Activated B cell treated with CpG ODN at 0.5 μM for 24 hours (primary cell): ENCODE measurements at regions of chr2 and their contacts with region 1.

Region 1: GRCh38 chr2:118061135-118061955 is 26.9 kb upstream of the INSIG2 start:
- DNase-seq: no peak
- ATAC-seq: peak; percentile 82
- H3K4me3 Mint-ChIP-seq: no peak overlapping the region
- H3K27ac Mint-ChIP-seq: no peak overlapping the region
- H3K4me1 Mint-ChIP-seq: peaks cover 47% of the 10 kb centered on the region
- H3K27me3 Mint-ChIP-seq: peaks cover 8% of the 10 kb centered on the region
- CTCF ChIP-seq: no peak

Region 2: DNA sequence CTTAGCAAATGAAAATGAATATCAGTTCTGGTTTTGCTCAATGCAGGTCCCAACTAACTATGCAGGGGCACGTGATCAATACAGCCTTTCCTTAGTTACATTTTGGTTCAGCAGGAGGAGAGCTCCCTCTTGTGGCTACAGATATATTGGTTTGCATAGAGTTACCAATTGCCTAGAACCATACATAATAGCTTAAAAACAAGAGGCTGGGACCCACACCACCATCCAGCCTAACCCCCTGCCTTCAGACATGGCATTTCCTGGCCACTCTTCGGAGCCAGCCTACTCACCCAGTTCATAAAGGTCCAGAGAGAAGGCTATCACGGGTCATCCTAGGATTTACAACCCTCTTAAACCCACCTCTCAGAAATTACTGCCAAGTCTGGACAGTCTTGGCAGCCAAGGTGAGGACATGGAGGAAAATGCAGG is 57.9 kb before region 1 on chr2:
- CTCF ChIA-PET with region 1: interaction called, 12 read pairs
- POLR2A ChIA-PET with region 1: no interaction called
- intact Hi-C with region 1: loop called (anchors 1 kb)
- DNase-seq: peak; percentile 17
- ATAC-seq: peak; percentile 96
- H3K4me3 Mint-ChIP-seq: no peak overlapping the region
- H3K27ac Mint-ChIP-seq: no peak overlapping the region
- H3K4me1 Mint-ChIP-seq: peaks cover 4% of the 10 kb centered on the region
- H3K27me3 Mint-ChIP-seq: no peaks in the 10 kb centered on the region
- CTCF ChIP-seq: peak; percentile 60

Region 3: DNA sequence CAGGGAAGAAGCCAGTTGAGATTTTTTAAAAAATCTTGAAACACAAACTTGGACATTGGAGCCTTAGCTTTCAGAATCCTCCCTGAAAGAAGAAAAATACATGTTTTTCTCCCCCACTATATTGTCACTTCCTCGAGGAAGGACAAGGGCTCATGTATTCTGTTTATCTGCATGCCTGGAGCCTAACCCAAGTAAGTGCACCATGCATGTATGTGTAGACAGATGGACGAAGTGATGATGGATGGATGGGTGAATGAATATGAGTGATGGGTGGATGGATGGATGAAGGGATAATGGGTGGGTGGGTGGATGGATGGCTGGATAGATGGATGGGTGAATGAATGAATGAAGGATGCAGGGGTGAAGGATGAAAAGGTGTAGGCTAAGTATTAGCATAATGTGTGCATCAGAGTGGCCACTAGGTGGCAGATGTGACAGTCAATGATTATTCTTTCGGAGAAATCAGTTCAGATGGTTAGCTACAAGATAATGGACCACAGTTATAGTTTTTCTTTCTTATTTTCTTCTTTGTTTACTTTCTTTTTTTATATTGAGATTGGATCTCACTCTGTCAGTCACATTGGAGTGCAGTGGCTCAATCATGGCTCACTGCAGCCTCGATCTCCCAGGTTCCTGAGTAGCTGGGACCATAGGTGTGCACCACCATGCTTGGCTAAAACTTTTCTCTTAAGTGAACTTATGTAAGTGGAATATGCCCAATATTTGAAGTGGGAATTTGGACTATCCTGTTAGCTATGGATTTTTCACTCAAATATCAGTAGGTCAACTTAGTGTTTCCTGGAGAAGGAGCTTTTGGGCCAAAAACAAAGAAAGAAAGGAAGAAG is 29.0 kb before region 1 on chr2:
- CTCF ChIA-PET with region 1: interaction called, 26 read pairs
- POLR2A ChIA-PET with region 1: no interaction called
- intact Hi-C with region 1: loop called (anchors 1 kb)
- DNase-seq: no peak
- ATAC-seq: peak; percentile 77
- H3K4me3 Mint-ChIP-seq: no peak overlapping the region
- H3K27ac Mint-ChIP-seq: no peak overlapping the region
- H3K4me1 Mint-ChIP-seq: peaks cover 14% of the 10 kb centered on the region
- H3K27me3 Mint-ChIP-seq: peaks cover 24% of the 10 kb centered on the region
- CTCF ChIP-seq: peak; percentile 24

Region 4: DNA sequence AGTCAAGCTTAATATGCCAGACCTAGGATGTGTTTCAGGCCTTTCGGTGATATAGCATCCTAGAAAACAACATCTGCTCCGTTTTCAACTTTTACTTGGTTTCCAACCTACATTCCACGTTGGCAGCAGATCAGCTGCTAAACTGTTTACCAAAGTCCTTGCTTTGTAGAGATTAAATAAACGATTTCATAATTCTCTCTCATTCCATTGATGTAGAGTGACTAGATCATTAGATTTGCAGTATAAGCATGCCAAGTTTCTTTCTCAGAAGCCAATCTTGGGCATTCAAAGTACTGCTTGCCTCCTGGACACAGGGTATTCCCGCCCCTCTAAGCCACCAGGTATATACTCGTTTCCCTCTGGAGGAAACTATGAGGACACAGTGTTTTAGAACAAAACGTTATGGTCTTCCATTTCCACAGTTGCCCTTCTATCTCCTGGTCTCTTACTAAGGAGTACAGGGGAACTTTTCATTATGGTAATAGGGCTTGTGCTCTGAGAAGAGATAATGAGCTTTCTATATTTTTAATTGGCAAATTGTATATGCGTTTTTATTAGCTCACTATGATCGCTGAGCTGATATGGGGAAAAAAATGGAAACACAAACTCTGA is 16.4 kb after region 1 on chr2:
- CTCF ChIA-PET with region 1: interaction called, 10 read pairs
- POLR2A ChIA-PET with region 1: no interaction called
- intact Hi-C with region 1: no loop called
- DNase-seq: no peak
- ATAC-seq: no peak
- H3K4me3 Mint-ChIP-seq: no peak overlapping the region
- H3K27ac Mint-ChIP-seq: no peak overlapping the region
- H3K4me1 Mint-ChIP-seq: no peaks in the 10 kb centered on the region
- H3K27me3 Mint-ChIP-seq: peaks cover 35% of the 10 kb centered on the region
- CTCF ChIP-seq: no peak

Region 5: DNA sequence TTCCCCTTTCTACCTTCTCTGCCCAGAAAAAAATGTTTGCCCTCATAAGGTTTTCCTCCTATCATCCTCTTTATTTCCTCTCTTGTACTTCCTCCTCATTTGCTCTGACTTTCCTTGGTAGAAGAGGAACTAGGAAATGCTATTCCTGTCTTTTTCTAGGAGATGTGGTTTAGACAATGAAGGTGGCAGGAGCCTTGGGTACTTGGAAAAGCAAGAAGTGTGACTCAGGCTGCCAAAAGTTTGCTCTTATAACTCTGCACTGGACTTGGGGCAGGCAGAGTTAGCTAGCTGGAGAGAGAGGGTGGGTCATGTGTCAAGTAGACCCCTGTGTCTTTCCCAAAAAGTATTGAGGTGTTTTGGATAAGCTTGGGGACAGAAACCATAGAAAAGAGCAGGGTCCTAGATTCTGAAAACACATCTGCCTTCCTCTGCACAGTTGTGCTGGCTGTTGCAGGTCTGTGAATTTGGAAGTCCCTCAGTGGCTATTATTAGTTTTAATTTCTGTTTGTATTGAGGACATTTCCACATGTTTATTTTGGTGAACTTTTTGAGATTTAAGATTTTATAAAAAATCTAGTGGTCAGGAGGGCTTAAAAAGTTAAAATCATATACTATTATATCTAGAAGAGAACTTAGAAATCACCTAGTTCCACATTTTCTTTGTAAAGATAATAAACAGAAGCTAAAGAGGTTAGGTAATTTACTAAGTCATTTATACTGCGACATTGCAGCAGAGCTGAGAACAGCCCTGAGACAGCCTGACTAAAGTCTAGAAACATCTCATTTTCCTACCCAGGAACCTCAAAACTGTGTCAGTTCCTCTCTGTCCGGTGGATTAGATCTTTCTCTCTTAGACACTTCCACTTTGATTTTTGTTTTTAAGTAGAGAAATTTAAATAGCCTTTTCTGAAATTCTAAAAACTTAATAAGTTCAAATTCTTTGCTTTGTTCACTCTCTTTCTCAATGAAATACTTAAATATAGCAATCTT is 42.9 kb after region 1 on chr2:
- CTCF ChIA-PET with region 1: no interaction called
- POLR2A ChIA-PET with region 1: no interaction called
- intact Hi-C with region 1: no loop called
- DNase-seq: no peak
- ATAC-seq: peak; percentile 60
- H3K4me3 Mint-ChIP-seq: no peak overlapping the region
- H3K27ac Mint-ChIP-seq: peak overlapping the region; percentile 61
- H3K4me1 Mint-ChIP-seq: peaks cover 13% of the 10 kb centered on the region
- H3K27me3 Mint-ChIP-seq: no peaks in the 10 kb centered on the region
- CTCF ChIP-seq: no peak

Region 6: GRCh38 chr2:118945881-118946280 is 884.5 kb after region 1 on chr2:
- CTCF ChIA-PET with region 1: no interaction called
- POLR2A ChIA-PET with region 1: no interaction called
- intact Hi-C with region 1: no loop called
- DNase-seq: no peak
- ATAC-seq: no peak
- H3K4me3 Mint-ChIP-seq: no peak overlapping the region
- H3K27ac Mint-ChIP-seq: no peak overlapping the region
- H3K4me1 Mint-ChIP-seq: no peaks in the 10 kb centered on the region
- H3K27me3 Mint-ChIP-seq: peaks cover 16% of the 10 kb centered on the region
- CTCF ChIP-seq: no peak